MCF 10A (cell line): ENCODE measurements at regions of chr2 and their contacts with region 1.

Region 1: GRCh38 chr2:39227628-39228412 is 15.9 kb downstream of the CDKL4 start:
- DNase-seq: peak; percentile 65
- H3K4me3 Mint-ChIP-seq: no peak overlapping the region
- H3K27ac Mint-ChIP-seq: no peak overlapping the region
- H3K4me1 Mint-ChIP-seq: peaks cover 5% of the 10 kb centered on the region
- H3K27me3 Mint-ChIP-seq: no peaks in the 10 kb centered on the region
- CTCF ChIP-seq: peak; percentile 71

Region 2: GRCh38 chr2:39059366-39059952 is 168.4 kb before region 1 on chr2:
- CTCF ChIA-PET with region 1: interaction called, 184 read pairs
- POLR2A ChIA-PET with region 1: interaction called, 9 read pairs
- intact Hi-C with region 1: loop called (anchors 1 kb)
- DNase-seq: peak; percentile 48
- H3K4me3 Mint-ChIP-seq: no peak overlapping the region
- H3K27ac Mint-ChIP-seq: no peak overlapping the region
- H3K4me1 Mint-ChIP-seq: no peaks in the 10 kb centered on the region
- H3K27me3 Mint-ChIP-seq: no peaks in the 10 kb centered on the region
- CTCF ChIP-seq: peak; percentile 55

Region 3: GRCh38 chr2:39069136-39069515 is 158.7 kb before region 1 on chr2:
- CTCF ChIA-PET with region 1: interaction called, 184 read pairs
- POLR2A ChIA-PET with region 1: interaction called, 6 read pairs
- intact Hi-C with region 1: no loop called
- DNase-seq: peak; percentile 44
- H3K4me3 Mint-ChIP-seq: no peak overlapping the region
- H3K27ac Mint-ChIP-seq: peak overlapping the region; percentile 70
- H3K4me1 Mint-ChIP-seq: peaks cover 32% of the 10 kb centered on the region
- H3K27me3 Mint-ChIP-seq: no peaks in the 10 kb centered on the region
- CTCF ChIP-seq: no peak

Region 4: GRCh38 chr2:39099870-39100728 is 127.7 kb before region 1 on chr2:
- CTCF ChIA-PET with region 1: interaction called, 10 read pairs
- POLR2A ChIA-PET with region 1: no interaction called
- intact Hi-C with region 1: no loop called
- DNase-seq: peak; percentile 15
- H3K4me3 Mint-ChIP-seq: no peak overlapping the region
- H3K27ac Mint-ChIP-seq: no peak overlapping the region
- H3K4me1 Mint-ChIP-seq: peaks cover 34% of the 10 kb centered on the region
- H3K27me3 Mint-ChIP-seq: no peaks in the 10 kb centered on the region
- CTCF ChIP-seq: no peak

Region 5: DNA sequence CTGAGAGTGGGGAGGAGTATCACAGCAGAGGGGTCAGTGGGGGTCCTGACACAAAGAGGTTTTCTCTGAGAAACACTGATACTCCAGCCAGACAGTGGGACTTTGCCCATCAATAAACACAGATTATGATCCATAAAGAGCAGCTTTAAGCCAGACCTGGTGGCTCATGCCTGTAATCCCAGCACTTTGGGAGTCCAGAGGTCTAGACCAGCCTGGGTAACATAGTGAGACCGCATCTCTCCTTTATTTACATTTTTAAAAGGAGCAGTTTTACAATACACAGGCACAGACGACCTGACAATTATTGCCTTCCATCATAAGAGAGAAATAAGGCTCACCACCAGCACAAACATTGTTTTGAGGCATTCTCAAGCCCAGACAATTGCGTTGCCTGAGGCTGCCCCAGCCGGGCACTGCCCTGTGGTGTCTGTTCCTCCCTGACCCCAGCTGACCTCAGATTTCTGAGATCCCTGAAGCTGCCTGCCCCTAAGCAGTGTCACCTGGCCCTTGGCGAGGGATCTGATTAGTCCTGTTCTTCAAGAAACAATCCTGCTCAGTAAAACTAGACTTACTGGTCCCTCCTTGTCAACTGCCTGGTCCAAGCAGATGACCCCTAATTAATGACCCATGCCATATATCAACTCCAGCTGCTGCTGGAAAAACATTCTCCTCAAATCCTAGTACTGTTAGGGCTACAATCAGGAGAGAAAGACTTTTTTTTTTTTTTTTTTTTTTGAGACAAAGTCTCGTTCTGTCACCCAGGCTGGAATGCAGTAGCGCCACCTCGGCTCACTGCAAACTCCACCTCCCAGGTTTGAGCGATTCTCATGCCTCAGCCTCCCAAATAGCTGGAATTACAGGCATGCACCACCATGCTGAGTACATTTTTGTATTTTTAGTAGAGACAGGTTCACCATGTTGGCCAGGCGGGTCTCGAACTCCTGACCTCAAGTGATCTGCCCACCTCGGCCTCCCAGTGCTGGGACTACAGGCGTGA is 47.5 kb before region 1 on chr2:
- CTCF ChIA-PET with region 1: interaction called, 14 read pairs
- POLR2A ChIA-PET with region 1: no interaction called
- intact Hi-C with region 1: no loop called
- DNase-seq: no peak
- H3K4me3 Mint-ChIP-seq: no peak overlapping the region
- H3K27ac Mint-ChIP-seq: no peak overlapping the region
- H3K4me1 Mint-ChIP-seq: peaks cover 1% of the 10 kb centered on the region
- H3K27me3 Mint-ChIP-seq: no peaks in the 10 kb centered on the region
- CTCF ChIP-seq: no peak

Region 6: GRCh38 chr2:39210846-39211245 is 17.0 kb before region 1 on chr2:
- CTCF ChIA-PET with region 1: interaction called, 15 read pairs
- POLR2A ChIA-PET with region 1: no interaction called
- intact Hi-C with region 1: no loop called
- DNase-seq: no peak
- H3K4me3 Mint-ChIP-seq: no peak overlapping the region
- H3K27ac Mint-ChIP-seq: no peak overlapping the region
- H3K4me1 Mint-ChIP-seq: no peaks in the 10 kb centered on the region
- H3K27me3 Mint-ChIP-seq: no peaks in the 10 kb centered on the region
- CTCF ChIP-seq: no peak

Region 7: DNA sequence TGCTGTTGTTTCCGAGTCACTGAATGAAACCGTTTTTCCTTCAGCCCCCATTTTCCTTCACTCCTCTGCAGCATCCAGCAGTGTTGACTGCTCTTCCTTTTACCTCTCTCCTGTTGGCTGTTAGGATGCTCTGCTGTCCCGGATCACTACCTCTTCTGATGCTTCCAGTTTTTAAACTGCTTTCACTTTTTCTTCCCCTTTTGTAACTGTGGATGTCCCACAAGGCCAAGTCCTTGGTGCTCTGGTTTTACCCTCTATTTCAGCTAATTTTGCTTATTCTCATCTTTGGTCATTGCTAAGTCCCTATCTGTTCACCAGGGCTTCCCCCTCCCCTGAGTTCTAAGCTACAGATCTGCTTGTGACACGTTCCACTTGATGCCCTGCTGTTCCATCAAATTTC is 248.7 kb after region 1 on chr2:
- CTCF ChIA-PET with region 1: no interaction called
- POLR2A ChIA-PET with region 1: no interaction called
- intact Hi-C with region 1: no loop called
- DNase-seq: no peak
- H3K4me3 Mint-ChIP-seq: no peak overlapping the region
- H3K27ac Mint-ChIP-seq: no peak overlapping the region
- H3K4me1 Mint-ChIP-seq: no peaks in the 10 kb centered on the region
- H3K27me3 Mint-ChIP-seq: no peaks in the 10 kb centered on the region
- CTCF ChIP-seq: no peak